Activated naive CD4-positive, alpha-beta T cell treated with anti-CD3 and anti-CD28 coated beads for 36 hours (primary cell): ENCODE measurements at regions of chr2 and their contacts with region 1.

Region 1: DNA sequence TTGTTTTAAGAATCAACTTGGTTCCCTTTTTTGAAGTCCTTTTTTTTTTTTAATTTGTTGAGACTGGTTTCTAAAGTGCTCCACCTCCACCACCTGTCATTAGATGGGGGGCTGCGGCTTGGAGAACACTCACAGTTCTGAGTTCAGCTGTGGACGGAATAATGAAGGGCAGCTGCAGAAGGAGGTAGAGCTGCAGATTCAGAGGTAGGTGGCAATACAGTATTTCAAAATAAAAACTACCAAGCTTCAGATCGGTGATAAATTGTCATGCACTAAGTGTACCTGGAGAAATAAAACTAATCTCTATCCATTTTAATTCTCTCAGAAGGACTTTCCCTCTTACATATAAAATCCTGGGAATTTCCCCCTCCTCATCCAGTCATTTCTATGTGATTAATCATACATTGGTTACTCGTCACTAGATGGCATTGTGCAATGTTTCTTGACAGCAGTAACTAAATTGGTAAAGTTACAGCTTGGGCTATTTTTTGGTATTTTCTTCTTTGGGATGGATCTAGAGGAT is 81.1 kb upstream of the SLC39A10 start:
- DNase-seq: peak; percentile 32
- H3K4me3 Mint-ChIP-seq: peak overlapping the region; percentile 37
- H3K27ac Mint-ChIP-seq: peak overlapping the region; percentile 78
- H3K4me1 Mint-ChIP-seq: peaks cover 77% of the 10 kb centered on the region
- H3K27me3 Mint-ChIP-seq: no peaks in the 10 kb centered on the region

Region 2: DNA sequence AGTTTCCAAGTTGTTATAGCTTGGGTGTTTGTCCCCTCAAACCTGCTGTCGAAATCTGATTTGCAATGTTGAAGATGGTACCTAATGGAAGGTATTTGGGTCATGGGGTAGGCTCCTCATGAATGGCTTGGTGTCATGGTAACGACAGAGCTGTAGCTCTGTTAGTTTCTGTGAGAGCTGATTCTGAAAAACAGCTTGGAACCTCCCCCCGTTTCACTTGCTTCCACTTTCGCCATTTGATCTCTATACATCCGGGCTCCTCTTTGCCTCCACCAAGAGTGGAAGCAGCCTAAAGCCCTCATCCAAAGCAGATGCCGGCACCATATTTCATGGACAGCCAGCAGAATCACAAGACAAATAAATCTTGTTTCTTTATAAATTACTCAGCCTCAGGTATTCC is 954.0 kb before region 1 on chr2:
- CTCF ChIA-PET with region 1: no interaction called
- intact Hi-C with region 1: no loop called
- DNase-seq: no peak
- H3K4me3 Mint-ChIP-seq: no peak overlapping the region
- H3K27ac Mint-ChIP-seq: no peak overlapping the region
- H3K4me1 Mint-ChIP-seq: no peaks in the 10 kb centered on the region
- H3K27me3 Mint-ChIP-seq: no peaks in the 10 kb centered on the region

Region 3: GRCh38 chr2:195049372-195050031 is 526.4 kb before region 1 on chr2:
- CTCF ChIA-PET with region 1: no interaction called
- intact Hi-C with region 1: loop called (anchors 10 kb)
- DNase-seq: no peak
- H3K4me3 Mint-ChIP-seq: no peak overlapping the region
- H3K27ac Mint-ChIP-seq: no peak overlapping the region
- H3K4me1 Mint-ChIP-seq: peaks cover 4% of the 10 kb centered on the region
- H3K27me3 Mint-ChIP-seq: no peaks in the 10 kb centered on the region

Region 4: GRCh38 chr2:195407782-195408181 is 168.2 kb before region 1 on chr2:
- CTCF ChIA-PET with region 1: no interaction called
- intact Hi-C with region 1: loop called (anchors 5 kb)
- DNase-seq: no peak
- H3K4me3 Mint-ChIP-seq: no peak overlapping the region
- H3K27ac Mint-ChIP-seq: no peak overlapping the region
- H3K4me1 Mint-ChIP-seq: peaks cover 18% of the 10 kb centered on the region
- H3K27me3 Mint-ChIP-seq: no peaks in the 10 kb centered on the region

Region 5: GRCh38 chr2:195458936-195459335 is 117.0 kb before region 1 on chr2:
- CTCF ChIA-PET with region 1: no interaction called
- intact Hi-C with region 1: no loop called
- DNase-seq: no peak
- H3K4me3 Mint-ChIP-seq: no peak overlapping the region
- H3K27ac Mint-ChIP-seq: no peak overlapping the region
- H3K4me1 Mint-ChIP-seq: peaks cover 14% of the 10 kb centered on the region
- H3K27me3 Mint-ChIP-seq: no peaks in the 10 kb centered on the region

Region 6: GRCh38 chr2:195498176-195498575 is 77.8 kb before region 1 on chr2:
- CTCF ChIA-PET with region 1: interaction called, 7 read pairs
- intact Hi-C with region 1: loop called (anchors 2 kb)
- DNase-seq: peak; percentile 76
- H3K4me3 Mint-ChIP-seq: no peak overlapping the region
- H3K27ac Mint-ChIP-seq: no peak overlapping the region
- H3K4me1 Mint-ChIP-seq: peaks cover 44% of the 10 kb centered on the region
- H3K27me3 Mint-ChIP-seq: no peaks in the 10 kb centered on the region

Region 7: GRCh38 chr2:195543902-195544894 is 31.7 kb before region 1 on chr2:
- CTCF ChIA-PET with region 1: interaction called, 3 read pairs
- intact Hi-C with region 1: loop called (anchors 1 kb)
- DNase-seq: peak; percentile 72
- H3K4me3 Mint-ChIP-seq: peak overlapping the region; percentile 40
- H3K27ac Mint-ChIP-seq: peak overlapping the region; percentile 91
- H3K4me1 Mint-ChIP-seq: peaks cover 67% of the 10 kb centered on the region
- H3K27me3 Mint-ChIP-seq: no peaks in the 10 kb centered on the region

Region 8: DNA sequence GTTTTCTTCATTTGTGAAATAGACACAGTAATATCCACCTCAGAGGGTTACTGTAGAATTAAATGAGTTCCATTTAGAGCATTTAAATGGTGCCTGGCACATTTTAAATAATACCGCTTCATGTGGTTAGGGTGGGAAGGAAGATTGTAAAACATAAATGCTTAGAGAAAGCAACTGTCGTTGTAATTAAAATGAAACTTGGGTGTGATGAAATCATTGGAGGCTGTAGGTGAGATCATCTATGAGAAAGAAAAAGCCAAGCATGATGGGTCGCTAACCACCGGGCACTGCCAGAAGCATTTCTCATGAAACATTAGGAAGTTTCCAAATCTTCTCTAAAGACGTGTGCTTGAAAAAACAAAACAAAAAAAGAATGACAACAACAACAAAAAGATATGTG is 72.8 kb after region 1 on chr2:
- CTCF ChIA-PET with region 1: no interaction called
- intact Hi-C with region 1: no loop called
- DNase-seq: peak; percentile 35
- H3K4me3 Mint-ChIP-seq: peak overlapping the region; percentile 63
- H3K27ac Mint-ChIP-seq: peak overlapping the region; percentile 69
- H3K4me1 Mint-ChIP-seq: peaks cover 18% of the 10 kb centered on the region
- H3K27me3 Mint-ChIP-seq: no peaks in the 10 kb centered on the region

Region 9: GRCh38 chr2:195923889-195924288 is 347.9 kb after region 1 on chr2:
- CTCF ChIA-PET with region 1: no interaction called
- intact Hi-C with region 1: loop called (anchors 5 kb)
- DNase-seq: no peak
- H3K4me3 Mint-ChIP-seq: no peak overlapping the region
- H3K27ac Mint-ChIP-seq: no peak overlapping the region
- H3K4me1 Mint-ChIP-seq: no peaks in the 10 kb centered on the region
- H3K27me3 Mint-ChIP-seq: no peaks in the 10 kb centered on the region

Region 10: GRCh38 chr2:195937176-195937575 is 361.2 kb after region 1 on chr2:
- CTCF ChIA-PET with region 1: no interaction called
- intact Hi-C with region 1: loop called (anchors 1 kb)
- DNase-seq: no peak
- H3K4me3 Mint-ChIP-seq: no peak overlapping the region
- H3K27ac Mint-ChIP-seq: no peak overlapping the region
- H3K4me1 Mint-ChIP-seq: no peaks in the 10 kb centered on the region
- H3K27me3 Mint-ChIP-seq: no peaks in the 10 kb centered on the region